CD4-positive, alpha-beta T cell (primary cell): ENCODE measurements at regions of chr3 and their contacts with region 1.

Region 1: GRCh38 chr3:178084938-178085816 is 451.1 kb upstream of the KCNMB2 start:
- DNase-seq: peak; percentile 14 to 73 (median 41)
- ATAC-seq: peak; percentile 97
- H3K4me3 ChIP-seq: no peak overlapping the region
- H3K4me3 Mint-ChIP-seq: peak overlapping the region; percentile 35
- H3K27ac ChIP-seq: no peak overlapping the region
- H3K27ac Mint-ChIP-seq: peak overlapping the region; percentile 64
- H3K4me1 ChIP-seq: peaks cover 14% of the 10 kb centered on the region
- H3K4me1 Mint-ChIP-seq: peaks cover 54% of the 10 kb centered on the region
- H3K27me3 ChIP-seq: no peaks in the 10 kb centered on the region
- H3K27me3 Mint-ChIP-seq: no peaks in the 10 kb centered on the region
- CTCF ChIP-seq: no peak

Region 2: DNA sequence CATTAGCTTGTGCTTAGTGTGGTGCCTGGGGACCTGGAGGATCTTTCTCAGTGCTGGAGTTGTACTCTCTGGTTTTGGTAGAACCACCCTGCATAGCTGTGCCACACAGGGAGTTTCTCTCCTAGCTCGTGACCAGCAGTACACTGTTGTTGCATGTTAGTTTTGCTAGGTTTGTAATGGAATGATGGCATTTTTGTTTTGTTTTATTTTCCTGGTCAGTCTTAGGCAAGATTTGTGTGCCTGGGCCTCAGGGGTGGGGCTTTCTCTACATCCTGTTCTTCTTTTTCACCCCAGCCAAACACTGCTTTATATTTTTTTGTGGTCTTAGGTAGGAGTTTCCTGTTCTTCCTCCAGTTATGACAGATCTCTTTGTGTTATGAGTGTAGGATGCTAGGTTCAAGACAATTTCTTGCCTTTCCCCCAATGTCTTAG is 83.5 kb before region 1 on chr3:
- CTCF ChIA-PET with region 1: no interaction called
- POLR2A ChIA-PET with region 1: interaction called, 3 read pairs
- intact Hi-C with region 1: loop called in 1 of 2 experiments (anchors 10 kb)
- DNase-seq: peak in 5 of 14 experiments; percentile 1 to 73 (median 22)
- ATAC-seq: peak; percentile 73
- H3K4me3 ChIP-seq: no peak overlapping the region
- H3K4me3 Mint-ChIP-seq: peak overlapping the region; percentile 69
- H3K27ac ChIP-seq: peak overlapping the region; percentile 29 to 61
- H3K27ac Mint-ChIP-seq: peak overlapping the region; percentile 81
- H3K4me1 ChIP-seq: peaks cover 14% of the 10 kb centered on the region
- H3K4me1 Mint-ChIP-seq: peaks cover 56% of the 10 kb centered on the region
- H3K27me3 ChIP-seq: no peaks in the 10 kb centered on the region
- H3K27me3 Mint-ChIP-seq: no peaks in the 10 kb centered on the region
- CTCF ChIP-seq: no peak